Activated T-helper 1 cell treated with anti-CD3 and anti-CD28 coated beads, Interleukin-12 subunit alpha, Interleukin-12 subunit beta, Interleukin-2, Interleukin-4 antibody, amounts not matched to agents 30 ng/mL and 10 ng/mL and 1 ng/mL, durations not matched to agents 14 hours and 24 hours and 36 hours (primary cell): ENCODE measurements at regions of chr11 and their contacts with region 1.

Region 1: DNA sequence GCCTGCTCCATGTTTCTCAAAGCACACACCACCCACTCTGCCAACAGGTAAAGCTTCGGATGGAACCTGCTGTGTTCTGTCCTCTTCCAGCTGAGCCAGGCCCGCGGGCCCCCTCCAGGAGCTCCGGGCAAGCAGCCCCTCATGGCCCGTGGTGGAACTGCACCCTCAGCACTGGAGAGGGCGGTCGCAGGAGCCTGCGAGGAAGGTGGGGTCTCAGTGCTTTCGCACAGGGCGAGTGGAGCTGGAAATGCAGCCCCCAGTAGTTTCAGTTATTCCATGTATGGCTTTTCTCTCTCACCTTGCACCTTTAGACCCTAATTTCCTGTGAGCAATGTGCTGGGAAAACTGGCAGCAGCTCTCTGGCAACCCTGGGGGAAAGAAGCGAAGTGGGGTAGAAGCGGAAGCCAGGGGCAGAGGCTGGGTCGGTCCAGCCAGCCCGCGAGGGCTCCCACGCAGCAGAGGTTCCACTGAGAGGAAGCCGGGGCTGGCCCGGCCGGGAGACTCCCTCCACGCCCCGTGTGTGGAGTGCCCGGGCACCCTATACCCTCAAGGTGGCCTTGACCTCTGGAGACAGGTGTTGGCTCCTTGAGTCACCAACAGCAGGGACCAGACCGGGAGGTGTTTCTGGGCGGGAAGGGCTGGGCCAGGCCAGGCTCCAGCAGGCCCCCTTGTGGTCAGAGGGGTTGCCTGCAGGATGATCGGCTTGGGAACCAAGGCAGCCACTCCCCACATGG is 119.9 kb upstream of the TMEM45B start:
- DNase-seq: peak; percentile 26
- H3K4me3 Mint-ChIP-seq: peak overlapping the region; percentile 56
- H3K27ac Mint-ChIP-seq: peak overlapping the region; percentile 31
- H3K4me1 Mint-ChIP-seq: peaks cover 5% of the 10 kb centered on the region
- H3K27me3 Mint-ChIP-seq: no peaks in the 10 kb centered on the region

Region 2: GRCh38 chr11:129364143-129364654 is 331.5 kb before region 1 on chr11:
- intact Hi-C with region 1: loop called (anchors 1 kb)
- DNase-seq: peak; percentile 75
- H3K4me3 Mint-ChIP-seq: no peak overlapping the region
- H3K27ac Mint-ChIP-seq: no peak overlapping the region
- H3K4me1 Mint-ChIP-seq: no peaks in the 10 kb centered on the region
- H3K27me3 Mint-ChIP-seq: peaks cover 34% of the 10 kb centered on the region

Region 3: GRCh38 chr11:129375751-129376657 is 319.7 kb before region 1 on chr11 and contains the start of gene BARX2:
- intact Hi-C with region 1: loop called (anchors 1 kb)
- DNase-seq: peak; percentile 21
- H3K4me3 Mint-ChIP-seq: peak within 1 kb of the TSS; percentile 88
- H3K27ac Mint-ChIP-seq: peak within 1 kb of the TSS; percentile 77
- H3K4me1 Mint-ChIP-seq: peaks cover 38% of the 10 kb centered on the region
- H3K27me3 Mint-ChIP-seq: peaks cover 63% of the 10 kb centered on the region
- total RNA-seq, gene BARX2: 8.8 and 9.1 TPM in 2 replicates

Region 4: DNA sequence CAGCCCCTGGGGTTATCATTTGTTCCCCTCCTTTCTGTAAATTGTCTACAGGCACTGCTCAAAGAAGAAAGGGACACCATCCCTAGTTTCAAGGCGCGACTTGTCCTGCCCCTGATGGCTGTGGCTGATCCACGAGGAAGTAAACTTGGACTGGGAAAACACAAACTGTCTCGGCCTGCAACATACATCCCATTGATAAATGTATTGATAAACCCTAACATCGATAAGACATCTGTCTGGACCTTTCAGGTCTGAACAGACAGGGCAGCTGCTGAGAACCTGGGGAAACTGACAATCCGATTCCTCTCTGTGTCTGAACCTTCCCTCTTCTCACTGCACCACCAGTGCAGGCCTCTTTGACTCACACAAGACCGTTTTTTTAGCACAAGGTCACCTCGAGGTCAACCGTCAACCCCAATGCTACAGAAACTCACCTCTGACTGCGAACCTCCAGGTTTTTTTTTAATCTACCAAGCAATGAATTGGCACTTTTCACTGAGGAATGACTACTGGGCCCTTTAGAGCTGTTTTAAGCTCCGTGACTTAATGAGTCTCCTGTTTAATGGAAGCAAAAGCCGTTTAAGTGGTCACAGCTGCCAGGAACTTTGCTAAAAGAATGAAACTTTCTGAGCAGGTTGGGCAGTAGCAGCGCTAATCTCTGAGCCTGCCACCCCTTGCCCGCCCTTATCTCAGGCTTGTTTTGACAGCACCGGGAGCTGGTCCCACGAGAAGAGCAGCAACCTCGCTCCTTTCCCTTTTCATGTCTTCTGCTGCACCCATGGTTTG is 83.9 kb before region 1 on chr11:
- intact Hi-C with region 1: no loop called
- DNase-seq: no peak
- H3K4me3 Mint-ChIP-seq: no peak overlapping the region
- H3K27ac Mint-ChIP-seq: no peak overlapping the region
- H3K4me1 Mint-ChIP-seq: no peaks in the 10 kb centered on the region
- H3K27me3 Mint-ChIP-seq: no peaks in the 10 kb centered on the region

Region 5: DNA sequence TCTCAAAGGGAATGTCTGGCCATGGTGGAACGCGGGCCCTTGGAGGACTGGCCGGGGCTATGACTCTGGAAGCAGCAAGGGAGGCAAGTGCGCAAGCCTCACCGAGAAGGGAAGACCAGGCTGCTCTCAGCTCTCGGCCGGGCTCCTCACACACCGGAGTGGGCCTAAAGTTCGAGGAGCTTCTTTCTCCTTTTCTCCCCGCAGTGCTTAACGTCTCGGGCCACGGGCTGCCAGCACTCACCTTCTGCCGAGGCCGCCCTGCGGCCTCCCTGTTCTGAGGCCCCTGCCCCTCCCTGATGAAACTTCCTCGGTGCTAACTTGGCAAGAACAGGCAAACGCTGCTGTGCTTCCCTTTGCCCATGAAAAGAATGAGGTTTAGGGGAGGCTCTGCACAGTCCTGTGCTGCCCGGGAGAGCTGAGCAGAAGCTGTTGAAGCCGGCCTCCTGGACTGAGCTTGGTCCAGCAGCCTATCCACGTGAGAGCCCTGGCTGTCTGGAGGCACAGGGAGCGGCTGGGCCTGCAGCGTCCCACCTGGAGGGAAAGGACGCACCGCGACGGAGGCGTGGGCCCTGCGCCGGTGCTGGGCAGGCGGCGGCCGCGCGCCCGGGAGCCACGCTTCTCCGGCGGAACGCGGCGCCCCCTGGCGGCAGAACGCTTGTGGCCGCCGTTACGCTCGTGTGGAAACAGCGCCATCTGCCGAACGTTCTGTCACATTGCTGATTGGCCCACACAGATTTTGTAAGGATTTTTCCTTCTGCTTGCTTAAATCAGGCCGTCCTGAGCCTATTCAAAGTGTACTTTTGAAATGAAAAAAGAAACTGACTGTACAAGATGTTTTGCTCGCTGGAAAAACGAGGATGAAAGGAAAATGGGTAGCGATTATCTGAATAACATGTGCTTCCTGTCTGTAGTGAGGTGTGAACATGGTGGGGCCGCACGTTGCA is 54.9 kb after region 1 on chr11:
- intact Hi-C with region 1: loop called (anchors 2 kb)
- DNase-seq: peak; percentile 71
- H3K4me3 Mint-ChIP-seq: no peak overlapping the region
- H3K27ac Mint-ChIP-seq: no peak overlapping the region
- H3K4me1 Mint-ChIP-seq: no peaks in the 10 kb centered on the region
- H3K27me3 Mint-ChIP-seq: peaks cover 4% of the 10 kb centered on the region